Esophagus squamous epithelium (tissue), 5 donors: ENCODE measurements at regions of chr9 and their contacts with region 1.

Region 1: DNA sequence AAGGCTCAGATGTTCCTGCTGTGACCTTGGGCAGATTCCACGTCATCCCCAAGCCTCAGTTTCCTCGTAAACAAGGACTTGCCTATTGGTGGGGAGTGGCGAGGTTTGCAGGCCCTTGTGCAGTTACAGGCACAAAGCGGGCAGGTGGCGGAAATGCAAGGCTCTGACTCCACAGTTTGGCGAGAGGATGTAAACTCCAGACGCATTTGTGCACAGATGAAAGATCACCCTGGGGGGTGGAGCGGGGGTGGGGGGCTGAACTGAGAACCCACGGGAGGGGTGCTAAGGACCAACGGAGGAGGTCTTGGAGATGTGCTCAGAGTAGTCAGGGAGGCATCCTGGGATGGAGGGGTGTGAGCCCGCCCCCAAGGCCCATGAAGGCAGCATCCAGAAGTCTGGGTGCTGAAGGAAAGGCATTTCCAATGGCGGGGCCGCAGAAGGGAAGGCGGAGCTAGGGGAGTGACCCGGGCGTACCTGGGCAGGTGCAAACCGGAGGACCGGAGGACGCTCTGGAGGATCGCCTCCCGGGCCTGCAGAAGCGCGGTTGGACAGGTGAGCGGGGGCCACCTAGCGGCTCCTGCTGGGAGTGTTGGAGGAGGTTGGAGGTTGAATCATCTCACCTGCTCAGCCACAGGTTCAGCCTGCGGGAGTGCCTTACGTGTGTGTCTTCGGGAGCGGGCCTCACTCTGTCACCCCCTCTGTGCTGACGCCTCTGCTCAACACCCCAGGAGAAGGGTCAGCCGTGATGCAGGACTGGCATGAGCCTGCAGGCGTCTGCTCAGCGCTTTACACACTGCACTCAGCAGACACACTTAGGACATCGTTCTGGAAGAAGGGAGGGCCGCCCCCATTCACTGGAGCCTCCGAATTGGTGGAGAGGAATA is 1.9 kb upstream of the FIBCD1 start:
- DNase-seq: no peak
- H3K4me3 ChIP-seq: peak overlapping the region in 1 of 4 donors; percentile 8
- H3K27ac ChIP-seq: no peak overlapping the region
- H3K4me1 ChIP-seq: peaks cover 20 to 51% (median 31%) of the 10 kb centered on the region in 3 donors
- H3K27me3 ChIP-seq: peaks cover 16 to 90% (median 27%) of the 10 kb centered on the region in 4 donors
- CTCF ChIP-seq: peak; percentile 31 to 94 (median 86)
- POLR2A ChIP-seq: no peak

Region 2: GRCh38 chr9:130701056-130702022 is 239.6 kb before region 1 on chr9:
- intact Hi-C with region 1: loop called (anchors 10 kb)
- DNase-seq: no peak
- H3K4me3 ChIP-seq: no peak overlapping the region
- H3K27ac ChIP-seq: peak overlapping the region in 3 of 4 donors; percentile 62 to 68 (median 65)
- H3K4me1 ChIP-seq: peaks cover 0 to 44% (median 4%) of the 10 kb centered on the region in 3 donors
- H3K27me3 ChIP-seq: no peaks in the 10 kb centered on the region
- CTCF ChIP-seq: peak; percentile 70 to 92 (median 82)
- POLR2A ChIP-seq: no peak

Region 3: DNA sequence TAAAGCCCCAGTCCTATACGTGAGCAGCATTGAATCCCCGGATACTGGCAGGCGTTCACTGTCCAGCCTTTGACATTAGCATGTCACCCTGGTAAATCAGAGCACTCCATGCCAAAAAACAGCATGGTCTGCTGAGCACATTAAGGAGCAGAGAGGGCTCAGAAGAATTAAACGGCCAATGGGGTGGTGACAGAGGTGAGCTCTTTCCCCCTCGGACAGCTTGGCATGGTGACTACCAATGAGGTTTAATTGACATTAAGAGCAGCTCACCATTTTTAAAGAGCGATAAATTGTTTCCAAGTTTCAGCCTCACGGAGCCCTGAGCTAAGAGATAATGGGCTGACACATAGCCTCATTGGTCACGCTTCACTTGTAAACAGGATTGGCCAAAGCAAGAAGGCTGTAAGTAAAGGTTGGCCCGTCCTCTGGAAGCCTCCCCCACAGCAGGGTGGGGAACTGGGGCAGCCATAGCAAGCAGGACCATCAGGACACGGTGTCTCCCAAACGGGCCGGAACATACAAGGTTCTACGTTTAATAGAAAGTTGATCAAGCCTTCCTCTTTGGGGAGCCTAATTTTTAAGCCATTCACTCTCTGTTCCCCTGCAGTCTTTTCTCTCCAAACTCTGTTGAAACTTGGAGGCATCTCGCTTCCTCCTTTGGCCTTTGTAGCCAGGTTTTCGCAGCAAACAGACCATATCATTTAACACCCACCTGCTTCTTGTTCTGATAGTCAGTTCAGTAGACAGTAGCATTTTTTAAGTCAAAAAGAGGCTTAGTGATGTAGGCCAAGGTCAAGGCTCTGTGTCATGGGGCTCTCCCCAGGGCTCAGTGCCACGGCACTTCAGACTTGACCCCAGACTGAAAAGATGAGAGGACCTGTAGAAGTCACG is 70.2 kb before region 1 on chr9:
- intact Hi-C with region 1: loop called (anchors 10 kb)
- DNase-seq: no peak
- H3K4me3 ChIP-seq: no peak overlapping the region
- H3K27ac ChIP-seq: peak overlapping the region in 3 of 4 donors; percentile 24 to 71 (median 66)
- H3K4me1 ChIP-seq: peaks cover 0 to 74% (median 7%) of the 10 kb centered on the region in 3 donors
- H3K27me3 ChIP-seq: no peaks in the 10 kb centered on the region
- CTCF ChIP-seq: no peak
- POLR2A ChIP-seq: no peak

Region 4: DNA sequence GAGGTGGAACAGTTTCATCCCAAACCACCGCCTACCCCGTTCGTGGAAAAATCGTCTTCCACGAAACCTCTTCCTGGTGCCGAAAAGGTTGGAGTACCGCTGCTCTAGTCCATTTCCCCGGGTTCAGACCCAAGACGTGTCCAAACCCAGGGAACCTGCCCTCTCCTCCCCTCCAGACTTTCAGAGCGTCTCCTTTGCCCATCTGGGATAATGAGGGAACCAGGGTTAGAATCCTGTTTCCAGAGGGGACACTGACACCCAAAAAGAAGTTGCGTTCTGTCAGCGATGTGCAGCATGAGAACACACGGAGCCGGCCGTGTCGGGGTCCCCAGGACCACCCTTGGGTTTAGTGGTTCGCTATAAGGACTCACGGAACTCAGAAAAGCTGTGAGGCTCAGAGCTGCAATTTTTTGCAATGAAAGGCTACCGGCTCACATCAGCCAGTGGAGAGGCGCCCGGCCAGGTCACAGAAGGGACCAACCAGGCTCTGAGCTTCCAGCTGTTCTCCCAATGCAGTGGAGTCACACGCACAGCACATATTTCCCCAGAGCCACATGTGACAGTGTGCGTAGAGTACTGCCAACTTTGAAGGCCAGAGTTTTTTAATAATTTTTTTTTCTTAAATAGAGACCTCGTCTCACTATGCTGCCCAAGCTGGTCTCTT is 87.4 kb after region 1 on chr9:
- intact Hi-C with region 1: no loop called
- DNase-seq: no peak
- H3K4me3 ChIP-seq: no peak overlapping the region
- H3K27ac ChIP-seq: no peak overlapping the region
- H3K4me1 ChIP-seq: no peaks in the 10 kb centered on the region
- H3K27me3 ChIP-seq: peaks cover 0 to 33% (median 0%) of the 10 kb centered on the region in 4 donors
- CTCF ChIP-seq: no peak
- POLR2A ChIP-seq: no peak